B cell (primary cell): ENCODE measurements at regions of chr1 and their contacts with region 1.

Region 1: DNA sequence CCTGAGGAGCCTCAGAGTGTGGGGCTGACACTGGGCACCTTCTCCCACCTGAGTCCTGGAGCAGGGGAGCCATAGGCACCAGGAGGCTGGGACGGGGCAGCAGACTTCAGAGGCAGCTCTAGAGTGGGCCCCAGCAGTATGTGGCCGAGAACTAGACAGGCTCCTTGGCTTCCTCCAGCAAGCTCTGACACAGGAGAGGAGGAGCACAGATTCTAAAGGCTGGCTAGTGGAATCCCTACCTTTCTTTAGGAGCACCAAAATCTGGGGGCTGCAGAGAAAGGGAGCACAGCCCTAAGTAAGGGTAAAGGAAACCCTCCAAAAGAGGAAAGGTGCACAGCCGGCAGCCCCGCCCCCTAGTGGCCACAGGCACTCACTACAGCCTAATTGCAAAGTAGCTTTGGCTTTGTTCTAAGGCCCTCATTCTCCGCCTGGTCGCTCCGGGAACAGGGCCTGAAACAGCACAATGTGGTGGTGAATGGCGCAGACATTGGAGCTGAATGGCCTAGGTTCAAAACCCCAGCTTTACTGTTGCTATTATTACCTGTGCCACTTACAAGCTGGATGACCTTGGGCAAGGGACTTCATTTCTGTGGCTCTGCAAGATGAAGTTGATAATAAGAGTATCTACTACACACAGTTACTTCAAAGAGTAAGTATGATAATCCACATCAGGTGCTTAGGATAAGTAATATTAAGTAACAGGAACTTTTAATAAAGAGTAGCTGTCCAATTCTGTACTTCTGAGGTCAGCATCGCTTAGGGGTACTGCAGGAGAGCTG is 8.8 kb upstream of the GUCA2A start:
- DNase-seq: peak; percentile 73
- ATAC-seq: peak; percentile 80
- H3K4me3 ChIP-seq: no peak overlapping the region
- H3K4me3 Mint-ChIP-seq: no peak overlapping the region
- H3K27ac ChIP-seq: no peak overlapping the region
- H3K27ac Mint-ChIP-seq: no peak overlapping the region
- H3K4me1 ChIP-seq: peaks cover 0 to 3% of the 10 kb centered on the region in 2 donors
- H3K4me1 Mint-ChIP-seq: no peaks in the 10 kb centered on the region
- H3K27me3 ChIP-seq: no peaks in the 10 kb centered on the region
- H3K27me3 Mint-ChIP-seq: no peaks in the 10 kb centered on the region
- CTCF ChIP-seq: peak; percentile 92

Region 2: DNA sequence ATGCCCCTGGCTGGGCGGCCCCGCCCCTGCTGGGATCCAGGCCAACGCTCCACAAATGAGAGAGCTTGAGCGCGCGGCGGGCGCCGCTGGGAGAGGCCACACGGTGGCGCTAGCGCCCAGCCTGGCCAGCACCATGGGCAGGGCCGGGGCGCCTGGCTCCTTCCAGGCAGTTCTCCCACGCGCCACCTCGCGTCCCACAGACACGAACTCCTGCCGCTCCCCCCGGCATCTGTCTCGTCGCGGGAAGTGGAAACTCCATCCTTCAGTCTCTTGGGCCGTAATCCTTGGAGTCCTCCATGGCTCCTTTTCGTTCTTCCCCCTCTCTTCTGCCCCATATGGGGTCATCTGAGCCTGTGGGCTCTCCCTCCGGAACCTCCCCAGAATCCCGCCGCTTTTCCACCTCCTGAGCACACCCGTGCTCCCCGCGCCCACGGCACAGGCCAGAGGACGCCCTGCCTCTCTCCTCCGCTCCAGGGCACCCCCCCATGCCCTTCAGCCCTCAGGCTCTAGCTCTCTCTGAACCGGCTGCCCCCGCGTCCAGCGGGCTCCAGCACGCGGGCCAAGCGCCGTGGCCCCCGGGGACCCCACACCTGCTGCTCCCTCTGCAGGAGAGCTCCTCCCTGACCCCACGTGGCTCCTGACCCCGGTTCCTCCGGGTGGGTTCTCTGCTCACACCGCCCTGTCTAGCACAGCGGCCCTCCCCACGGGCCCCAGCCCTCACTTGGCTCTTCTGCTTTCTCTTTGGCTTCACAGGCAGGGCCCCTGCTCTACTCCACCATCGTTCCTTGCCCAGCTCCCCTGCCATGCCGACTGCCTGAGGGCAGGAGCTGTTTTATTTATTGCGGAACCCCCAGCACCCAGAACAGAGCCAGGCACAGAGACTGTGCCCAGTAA is 656.9 kb before region 1 on chr1:
- CTCF ChIA-PET with region 1: interaction called, 27 read pairs
- POLR2A ChIA-PET with region 1: no interaction called
- intact Hi-C with region 1: loop called (anchors 1 kb)
- DNase-seq: peak; percentile 77
- ATAC-seq: peak; percentile 87
- H3K4me3 ChIP-seq: peak overlapping the region in 4 of 5 experiments; percentile 48 to 59 (median 53)
- H3K4me3 Mint-ChIP-seq: peak overlapping the region; percentile 87
- H3K27ac ChIP-seq: no peak overlapping the region
- H3K27ac Mint-ChIP-seq: peak overlapping the region; percentile 37
- H3K4me1 ChIP-seq: peaks cover 25 to 39% of the 10 kb centered on the region in 2 donors
- H3K4me1 Mint-ChIP-seq: peaks cover 35% of the 10 kb centered on the region
- H3K27me3 ChIP-seq: no peaks in the 10 kb centered on the region
- H3K27me3 Mint-ChIP-seq: no peaks in the 10 kb centered on the region
- CTCF ChIP-seq: peak; percentile 95

Region 3: GRCh38 chr1:42146626-42147320 is 26.6 kb before region 1 on chr1:
- CTCF ChIA-PET with region 1: interaction called, 17 read pairs
- POLR2A ChIA-PET with region 1: no interaction called
- intact Hi-C with region 1: no loop called
- DNase-seq: peak; percentile 56
- ATAC-seq: no peak
- H3K4me3 ChIP-seq: no peak overlapping the region
- H3K4me3 Mint-ChIP-seq: no peak overlapping the region
- H3K27ac ChIP-seq: no peak overlapping the region
- H3K27ac Mint-ChIP-seq: no peak overlapping the region
- H3K4me1 ChIP-seq: no peaks in the 10 kb centered on the region
- H3K4me1 Mint-ChIP-seq: no peaks in the 10 kb centered on the region
- H3K27me3 ChIP-seq: peaks cover 0 to 17% (median 5%) of the 10 kb centered on the region in 4 experiments
- H3K27me3 Mint-ChIP-seq: peaks cover 18% of the 10 kb centered on the region
- CTCF ChIP-seq: peak; percentile 73

Region 4: DNA sequence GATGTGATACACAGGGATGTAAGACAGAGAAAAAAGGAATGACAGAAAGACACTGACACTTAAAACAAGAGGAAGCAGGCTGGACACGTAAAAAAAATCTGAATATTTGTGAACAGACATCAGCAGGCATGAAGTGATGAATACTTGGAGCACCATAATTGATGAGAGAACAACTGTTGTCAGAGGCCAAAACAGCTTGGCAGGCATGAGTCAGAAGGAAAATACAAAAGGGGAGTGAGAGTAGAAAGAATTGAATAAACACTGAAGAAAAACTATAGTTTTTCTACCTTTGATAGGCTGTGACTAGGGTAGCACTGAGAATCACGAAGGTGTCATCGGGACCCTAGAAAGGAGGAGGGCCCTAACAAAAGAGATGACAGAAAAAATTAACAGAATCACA is 12.8 kb after region 1 on chr1:
- CTCF ChIA-PET with region 1: interaction called, 27 read pairs
- POLR2A ChIA-PET with region 1: no interaction called
- intact Hi-C with region 1: no loop called
- DNase-seq: no peak
- ATAC-seq: no peak
- H3K4me3 ChIP-seq: no peak overlapping the region
- H3K4me3 Mint-ChIP-seq: no peak overlapping the region
- H3K27ac ChIP-seq: no peak overlapping the region
- H3K27ac Mint-ChIP-seq: no peak overlapping the region
- H3K4me1 ChIP-seq: no peaks in the 10 kb centered on the region
- H3K4me1 Mint-ChIP-seq: no peaks in the 10 kb centered on the region
- H3K27me3 ChIP-seq: no peaks in the 10 kb centered on the region
- H3K27me3 Mint-ChIP-seq: no peaks in the 10 kb centered on the region
- CTCF ChIP-seq: no peak

Region 5: DNA sequence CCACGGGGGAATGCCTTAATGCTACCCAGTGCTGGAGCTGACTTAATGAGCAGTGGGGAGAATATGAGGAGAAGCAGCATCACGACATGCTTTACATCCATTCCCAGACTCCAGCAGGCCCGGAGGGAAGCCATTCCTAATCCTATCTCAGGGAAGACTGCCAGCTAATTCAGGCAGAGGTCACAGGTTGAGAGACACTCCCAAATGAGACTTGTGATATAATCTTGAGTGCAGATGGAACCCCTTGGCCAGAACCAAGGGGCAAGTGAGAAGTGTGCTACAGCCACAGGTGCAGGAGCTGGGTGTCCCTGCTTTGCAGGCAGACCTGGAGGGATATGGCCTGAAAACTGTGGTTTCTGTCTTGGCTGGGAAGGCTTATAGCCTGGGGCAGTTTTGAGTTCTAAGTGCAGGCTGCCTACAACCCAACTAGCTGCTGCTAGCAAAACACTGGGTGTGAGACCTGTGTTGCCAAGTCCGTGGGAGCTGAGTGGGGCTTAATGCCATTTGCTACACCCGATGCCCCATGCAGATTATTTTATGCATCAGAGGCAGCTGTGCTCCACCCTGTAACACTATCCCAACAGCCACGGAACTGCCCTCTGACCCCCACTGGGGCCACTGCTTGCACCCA is 36.4 kb after region 1 on chr1:
- CTCF ChIA-PET with region 1: interaction called, 17 read pairs
- POLR2A ChIA-PET with region 1: no interaction called
- intact Hi-C with region 1: no loop called
- DNase-seq: no peak
- ATAC-seq: no peak
- H3K4me3 ChIP-seq: no peak overlapping the region
- H3K4me3 Mint-ChIP-seq: no peak overlapping the region
- H3K27ac ChIP-seq: no peak overlapping the region
- H3K27ac Mint-ChIP-seq: no peak overlapping the region
- H3K4me1 ChIP-seq: peaks cover 14 to 16% of the 10 kb centered on the region in 2 donors
- H3K4me1 Mint-ChIP-seq: peaks cover 49% of the 10 kb centered on the region
- H3K27me3 ChIP-seq: no peaks in the 10 kb centered on the region
- H3K27me3 Mint-ChIP-seq: no peaks in the 10 kb centered on the region
- CTCF ChIP-seq: no peak